ENCODE measurements at regions of chr19 and their contacts with region 1.

Region 1: GRCh38 chr19:1113033-1113985 is 9.5 kb downstream of the GPX4 start:
- DNase-seq: peak; percentile 84
- ATAC-seq: peak; percentile 95
- H3K4me3 Mint-ChIP-seq: no peak overlapping the region
- H3K27ac Mint-ChIP-seq: peak overlapping the region; percentile 41
- H3K4me1 Mint-ChIP-seq: peaks cover 5% of the 10 kb centered on the region
- H3K27me3 Mint-ChIP-seq: no peaks in the 10 kb centered on the region
- CTCF ChIP-seq: no peak

Region 2: GRCh38 chr19:892243-893050 is 220.9 kb before region 1 on chr19:
- CTCF ChIA-PET with region 1: no interaction called
- POLR2A ChIA-PET with region 1: no interaction called
- intact Hi-C with region 1: no loop called
- DNase-seq: no peak
- ATAC-seq: peak; percentile 57
- H3K4me3 Mint-ChIP-seq: peak overlapping the region; percentile 91
- H3K27ac Mint-ChIP-seq: peak overlapping the region; percentile 99
- H3K4me1 Mint-ChIP-seq: peaks cover 21% of the 10 kb centered on the region
- H3K27me3 Mint-ChIP-seq: no peaks in the 10 kb centered on the region
- CTCF ChIP-seq: no peak

Region 3: DNA sequence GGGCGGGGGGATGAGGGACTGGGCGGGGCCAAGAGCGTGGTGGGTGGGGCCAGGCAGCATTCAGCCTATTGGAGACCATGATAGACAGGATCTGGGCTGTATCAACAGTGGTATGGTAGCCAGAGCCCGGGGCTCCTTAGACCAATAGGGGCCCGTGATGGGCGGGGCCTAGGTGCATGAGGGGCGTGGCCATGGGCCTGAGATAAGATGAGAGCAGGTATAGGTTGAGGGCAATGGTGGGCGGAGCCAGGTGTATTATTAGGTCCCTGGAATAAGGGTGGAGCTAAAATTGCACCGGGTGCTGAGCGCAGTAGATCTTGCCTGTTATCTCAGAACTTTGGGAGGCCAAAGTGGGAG is 68.1 kb before region 1 on chr19:
- CTCF ChIA-PET with region 1: no interaction called
- POLR2A ChIA-PET with region 1: no interaction called
- intact Hi-C with region 1: no loop called
- DNase-seq: peak; percentile 45
- ATAC-seq: peak; percentile 43
- H3K4me3 Mint-ChIP-seq: no peak overlapping the region
- H3K27ac Mint-ChIP-seq: no peak overlapping the region
- H3K4me1 Mint-ChIP-seq: peaks cover 18% of the 10 kb centered on the region
- H3K27me3 Mint-ChIP-seq: no peaks in the 10 kb centered on the region
- CTCF ChIP-seq: no peak

Region 4: GRCh38 chr19:1189419-1189818 is 76.1 kb after region 1 on chr19:
- CTCF ChIA-PET with region 1: interaction called, 24 read pairs
- POLR2A ChIA-PET with region 1: interaction called, 13 read pairs
- intact Hi-C with region 1: loop called (anchors 5 kb)
- DNase-seq: no peak
- ATAC-seq: no peak
- H3K4me3 Mint-ChIP-seq: no peak overlapping the region
- H3K27ac Mint-ChIP-seq: no peak overlapping the region
- H3K4me1 Mint-ChIP-seq: no peaks in the 10 kb centered on the region
- H3K27me3 Mint-ChIP-seq: no peaks in the 10 kb centered on the region
- CTCF ChIP-seq: no peak